H1 (cell line): ENCODE measurements at regions of chr10 and their contacts with region 1.

Region 1: DNA sequence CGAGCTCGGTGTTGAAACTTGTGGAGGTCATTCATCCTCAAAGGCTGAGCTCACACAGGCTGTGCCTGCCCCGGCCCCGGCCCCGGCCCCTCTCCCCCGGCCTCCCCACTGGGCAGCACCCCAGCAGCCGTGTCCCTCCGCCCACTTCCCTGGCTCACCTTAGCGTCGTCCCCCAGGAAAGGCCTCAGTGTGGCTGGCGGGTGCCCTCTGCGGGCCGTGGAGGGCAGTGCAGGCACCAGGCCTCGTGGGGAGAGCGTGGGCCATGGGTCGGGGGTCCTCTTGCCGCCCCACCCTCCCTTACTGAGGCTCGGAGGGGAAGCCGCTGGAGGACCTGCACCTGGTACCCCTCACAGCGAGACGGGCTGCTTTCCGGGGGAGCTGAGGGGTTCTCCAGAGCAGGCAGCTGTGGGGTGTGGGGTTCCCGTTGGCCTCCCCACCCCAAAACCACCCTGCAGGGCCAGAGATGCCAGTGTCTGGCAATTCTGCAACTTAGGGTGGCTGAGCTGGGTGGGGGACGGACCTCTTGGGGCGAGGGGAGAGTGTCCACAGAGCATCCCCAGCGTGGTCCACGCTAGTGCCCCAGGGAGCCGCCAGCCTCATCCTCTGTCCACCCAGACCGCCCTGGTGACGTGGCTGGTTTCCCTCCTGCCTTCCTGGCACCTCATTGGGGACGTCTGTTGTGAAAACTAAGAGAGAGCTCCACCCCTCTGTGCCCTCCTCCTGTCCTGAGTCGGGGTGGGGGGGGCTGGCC is 44.2 kb upstream of the DPYSL4 start:
- DNase-seq: peak in 1 of 2 experiments; percentile 86
- H3K4me3 ChIP-seq: no peak overlapping the region
- H3K27ac ChIP-seq: no peak overlapping the region
- H3K4me1 ChIP-seq: peaks cover 0 to 9% (median 2%) of the 10 kb centered on the region in 4 experiments; a peak in 2 of 7 replicates
- H3K27me3 ChIP-seq: no peaks in the 10 kb centered on the region
- CTCF ChIP-seq: peak; percentile 79 to 94 (median 84)
- EP300 ChIP-seq: no peak
- POLR2A ChIP-seq: no peak
- RAD21 ChIP-seq: peak; percentile 83 to 89

Region 2: DNA sequence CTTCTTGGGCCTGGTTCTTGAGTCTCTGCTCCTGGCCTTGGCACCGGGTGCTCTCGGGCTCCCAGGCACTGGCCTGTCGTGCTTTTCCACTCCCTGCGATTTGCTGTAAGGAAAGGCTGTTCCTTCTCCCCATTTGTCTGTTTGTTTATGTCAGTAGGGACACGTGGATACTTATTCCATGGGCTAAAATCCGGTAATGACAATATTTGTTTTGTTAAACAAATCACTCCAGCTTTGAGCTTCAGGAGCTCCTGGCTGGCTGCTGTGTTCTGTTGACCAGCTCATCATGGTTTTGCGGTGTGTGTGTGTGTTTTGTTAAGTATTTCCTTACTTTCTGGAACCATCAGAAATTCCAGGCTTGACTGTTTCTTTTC is 94.3 kb before region 1 on chr10:
- CTCF ChIA-PET with region 1: interaction called, 39 read pairs
- POLR2A ChIA-PET with region 1: no interaction called
- DNase-seq: no peak
- H3K4me3 ChIP-seq: no peak overlapping the region
- H3K27ac ChIP-seq: no peak overlapping the region
- H3K4me1 ChIP-seq: peaks cover 6 to 9% (median 8%) of the 10 kb centered on the region in 4 experiments; a peak in 6 of 7 replicates
- H3K27me3 ChIP-seq: no peaks in the 10 kb centered on the region
- CTCF ChIP-seq: no peak
- EP300 ChIP-seq: no peak
- POLR2A ChIP-seq: no peak
- RAD21 ChIP-seq: no peak

Region 3: GRCh38 chr10:132065491-132066105 is 77.0 kb before region 1 on chr10 and contains the start of gene JAKMIP3:
- CTCF ChIA-PET with region 1: interaction called, 11 read pairs
- POLR2A ChIA-PET with region 1: no interaction called
- DNase-seq: peak in 1 of 2 experiments; percentile 72
- H3K4me3 ChIP-seq: peak within 1 kb of the TSS in 2 of 4 experiments; percentile 23 to 37; a peak in 4 of 8 replicates
- H3K27ac ChIP-seq: no peak within 1 kb of the TSS
- H3K4me1 ChIP-seq: peaks cover 0 to 17% (median 11%) of the 10 kb centered on the region in 4 experiments; a peak in 6 of 7 replicates
- H3K27me3 ChIP-seq: peaks cover 0 to 2% (median 0%) of the 10 kb centered on the region in 4 experiments; a peak in 2 of 7 replicates
- CTCF ChIP-seq: no peak
- EP300 ChIP-seq: no peak
- POLR2A ChIP-seq: no peak; a peak in 1 of 3 replicates
- RAD21 ChIP-seq: no peak
- total RNA-seq, gene JAKMIP3: 0.84 and 0.91 TPM in 2 replicates

Region 4: DNA sequence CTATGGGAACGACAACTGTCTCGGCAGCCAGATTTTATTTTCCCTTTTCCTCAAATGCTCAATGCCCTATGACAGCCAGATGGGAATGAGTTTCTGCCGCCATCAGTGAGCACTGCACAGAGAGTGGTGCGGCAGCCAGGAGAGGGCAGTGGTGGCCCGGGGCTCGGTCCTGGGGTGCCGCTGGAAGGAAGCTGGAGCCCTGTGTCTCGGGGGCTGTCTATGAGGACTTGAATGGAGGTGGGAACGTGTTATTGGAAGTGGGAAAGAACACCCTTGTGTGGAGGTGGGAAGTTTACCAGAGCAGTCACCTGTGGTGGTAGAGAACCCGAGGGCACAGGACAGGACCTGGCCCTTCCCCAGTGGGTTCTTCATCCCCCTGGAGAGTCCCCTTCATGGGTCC is 41.1 kb before region 1 on chr10:
- CTCF ChIA-PET with region 1: interaction called, 19 read pairs
- POLR2A ChIA-PET with region 1: no interaction called
- DNase-seq: peak in 1 of 2 experiments; percentile 50
- H3K4me3 ChIP-seq: no peak overlapping the region
- H3K27ac ChIP-seq: no peak overlapping the region
- H3K4me1 ChIP-seq: no peaks in the 10 kb centered on the region; a peak in 1 of 7 replicates
- H3K27me3 ChIP-seq: no peaks in the 10 kb centered on the region
- CTCF ChIP-seq: peak; percentile 33 to 49 (median 37); a peak in 3 of 4 replicates
- EP300 ChIP-seq: no peak
- POLR2A ChIP-seq: no peak
- RAD21 ChIP-seq: peak; percentile 34 to 59; a peak in 3 of 4 replicates

Region 5: GRCh38 chr10:132209130-132209529 is 66.5 kb after region 1 on chr10:
- CTCF ChIA-PET with region 1: no interaction called
- POLR2A ChIA-PET with region 1: no interaction called
- DNase-seq: no peak
- H3K4me3 ChIP-seq: no peak overlapping the region
- H3K27ac ChIP-seq: no peak overlapping the region
- H3K4me1 ChIP-seq: no peaks in the 10 kb centered on the region
- H3K27me3 ChIP-seq: no peaks in the 10 kb centered on the region
- CTCF ChIP-seq: no peak
- EP300 ChIP-seq: no peak
- POLR2A ChIP-seq: no peak
- RAD21 ChIP-seq: no peak